Activated CD4-positive, alpha-beta memory T cell treated with anti-CD3 and anti-CD28 coated beads for 36 hours (primary cell): ENCODE measurements at regions of chr14 and their contacts with region 1.

Region 1: GRCh38 chr14:91323671-91324605 is 79.4 kb upstream of the GPR68 start:
- DNase-seq: peak; percentile 97
- H3K4me3 Mint-ChIP-seq: peak overlapping the region; percentile 82
- H3K27ac Mint-ChIP-seq: peak overlapping the region; percentile 99
- H3K4me1 Mint-ChIP-seq: peaks cover 62% of the 10 kb centered on the region
- H3K27me3 Mint-ChIP-seq: no peaks in the 10 kb centered on the region

Region 2: DNA sequence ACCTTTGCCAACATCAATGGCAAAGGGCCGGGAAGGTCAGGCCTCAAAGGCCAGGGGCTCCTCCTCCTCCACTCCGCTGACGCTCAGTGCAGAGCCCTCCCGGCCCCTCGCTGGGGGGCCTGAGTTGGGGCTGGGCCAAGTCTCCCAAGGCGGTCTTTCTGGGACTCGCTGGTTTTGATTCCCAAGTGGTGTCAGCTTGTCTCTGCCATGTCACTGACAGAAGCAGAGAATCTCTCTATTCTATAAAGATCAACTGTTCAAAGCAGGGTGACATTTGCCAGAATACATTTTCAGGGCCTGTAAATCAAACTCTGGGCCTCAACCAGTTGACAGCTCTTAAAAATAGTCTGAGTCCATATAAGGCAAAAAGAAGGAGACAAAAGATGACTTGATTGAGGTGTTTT is 17.8 kb after region 1 on chr14:
- CTCF ChIA-PET with region 1: interaction called, 14 read pairs
- POLR2A ChIA-PET with region 1: no interaction called
- intact Hi-C with region 1: no loop called
- DNase-seq: no peak
- H3K4me3 Mint-ChIP-seq: no peak overlapping the region
- H3K27ac Mint-ChIP-seq: no peak overlapping the region
- H3K4me1 Mint-ChIP-seq: peaks cover 16% of the 10 kb centered on the region
- H3K27me3 Mint-ChIP-seq: no peaks in the 10 kb centered on the region

Region 3: DNA sequence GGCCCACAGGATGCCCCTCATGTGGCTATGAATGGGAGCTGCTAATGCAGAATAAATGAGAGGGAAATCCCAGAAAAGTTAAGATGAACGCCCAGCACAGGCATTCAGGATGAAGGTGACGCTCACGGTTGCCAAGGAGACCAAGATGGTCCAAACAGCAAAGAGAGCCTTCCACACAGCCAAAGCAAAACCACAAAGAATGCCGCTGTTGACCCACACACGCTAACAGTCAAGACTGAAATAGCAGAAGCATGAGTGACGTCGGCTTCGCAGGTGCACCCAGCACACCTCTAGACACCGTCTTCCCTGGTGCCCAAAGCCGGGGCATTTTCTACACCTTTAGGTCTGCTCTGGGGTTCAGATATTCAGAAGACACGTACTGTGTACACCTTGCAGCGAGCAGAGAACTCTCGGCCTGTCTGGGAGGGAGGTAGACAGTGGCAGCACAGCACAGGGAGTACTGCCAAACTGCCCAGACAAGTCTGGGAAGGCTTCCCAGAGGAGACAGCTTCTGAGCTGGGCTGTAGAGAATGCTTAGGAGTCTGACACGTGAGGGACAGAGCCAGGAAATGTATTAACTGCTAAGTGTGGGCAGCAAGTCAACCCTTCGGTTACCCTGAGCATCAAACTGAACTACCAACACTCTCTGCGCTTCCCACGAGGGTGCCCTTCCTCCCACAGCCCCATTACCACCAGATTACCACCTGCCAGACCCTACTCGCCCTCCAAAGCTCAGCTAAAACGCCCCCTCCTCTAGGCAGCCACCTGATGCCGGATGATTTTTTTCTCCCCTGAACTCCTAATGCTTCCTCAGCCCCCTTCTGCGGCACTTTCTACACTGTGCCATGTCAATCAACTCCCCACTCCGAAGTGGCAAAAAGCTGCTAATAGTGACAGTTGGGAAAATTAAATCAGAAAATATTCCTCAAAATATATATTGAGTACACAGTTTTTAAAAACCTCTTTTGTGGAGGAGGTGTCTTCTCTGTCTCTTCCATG is 43.5 kb after region 1 on chr14:
- CTCF ChIA-PET with region 1: interaction called, 18 read pairs
- POLR2A ChIA-PET with region 1: no interaction called
- intact Hi-C with region 1: loop called (anchors 1 kb)
- DNase-seq: peak; percentile 78
- H3K4me3 Mint-ChIP-seq: peak overlapping the region; percentile 59
- H3K27ac Mint-ChIP-seq: peak overlapping the region; percentile 80
- H3K4me1 Mint-ChIP-seq: peaks cover 86% of the 10 kb centered on the region
- H3K27me3 Mint-ChIP-seq: no peaks in the 10 kb centered on the region

Region 4: DNA sequence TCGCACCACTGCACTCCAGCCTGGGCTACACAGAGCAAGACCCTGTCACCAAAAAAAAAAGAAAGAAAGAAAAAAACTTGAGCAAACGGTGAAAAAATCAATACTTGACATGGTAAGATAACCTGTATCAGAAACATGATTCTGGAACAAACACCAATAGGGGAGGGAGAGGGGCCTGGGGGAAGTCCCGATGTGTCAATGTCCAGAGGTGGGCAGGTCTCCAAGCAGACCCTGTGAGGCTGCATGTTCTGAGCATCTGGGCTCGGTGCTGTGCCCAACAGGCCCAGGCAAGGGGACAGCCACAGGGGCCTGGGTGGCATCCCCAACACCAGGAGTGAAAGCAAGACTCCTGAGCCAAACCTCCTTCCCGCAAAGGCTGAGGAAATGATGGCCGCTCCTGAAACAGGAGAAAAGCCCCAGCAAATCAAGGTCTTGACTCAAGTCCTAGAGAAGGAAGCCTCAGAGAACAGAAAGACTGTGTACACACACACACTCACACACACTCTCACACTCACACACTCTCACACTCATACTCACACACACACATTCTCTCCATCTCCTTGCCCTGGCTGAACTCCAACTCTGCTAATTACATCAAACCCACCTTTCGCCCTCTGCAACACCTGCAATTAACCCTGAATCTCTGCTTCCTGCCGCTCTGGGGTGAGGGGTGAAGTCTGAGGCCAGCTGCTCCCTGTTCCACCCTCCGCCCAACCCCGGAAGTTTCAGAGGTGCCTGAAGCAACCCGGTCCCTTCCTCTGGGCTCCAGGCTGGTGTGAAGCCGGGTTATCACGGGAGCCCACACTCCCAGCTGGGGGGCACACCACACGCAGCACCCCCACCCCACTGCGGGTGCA is 73.2 kb after region 1 on chr14:
- CTCF ChIA-PET with region 1: interaction called, 11 read pairs
- POLR2A ChIA-PET with region 1: interaction called, 5 read pairs
- intact Hi-C with region 1: no loop called
- DNase-seq: peak; percentile 84
- H3K4me3 Mint-ChIP-seq: peak overlapping the region; percentile 64
- H3K27ac Mint-ChIP-seq: peak overlapping the region; percentile 89
- H3K4me1 Mint-ChIP-seq: peaks cover 92% of the 10 kb centered on the region
- H3K27me3 Mint-ChIP-seq: no peaks in the 10 kb centered on the region

Region 5: DNA sequence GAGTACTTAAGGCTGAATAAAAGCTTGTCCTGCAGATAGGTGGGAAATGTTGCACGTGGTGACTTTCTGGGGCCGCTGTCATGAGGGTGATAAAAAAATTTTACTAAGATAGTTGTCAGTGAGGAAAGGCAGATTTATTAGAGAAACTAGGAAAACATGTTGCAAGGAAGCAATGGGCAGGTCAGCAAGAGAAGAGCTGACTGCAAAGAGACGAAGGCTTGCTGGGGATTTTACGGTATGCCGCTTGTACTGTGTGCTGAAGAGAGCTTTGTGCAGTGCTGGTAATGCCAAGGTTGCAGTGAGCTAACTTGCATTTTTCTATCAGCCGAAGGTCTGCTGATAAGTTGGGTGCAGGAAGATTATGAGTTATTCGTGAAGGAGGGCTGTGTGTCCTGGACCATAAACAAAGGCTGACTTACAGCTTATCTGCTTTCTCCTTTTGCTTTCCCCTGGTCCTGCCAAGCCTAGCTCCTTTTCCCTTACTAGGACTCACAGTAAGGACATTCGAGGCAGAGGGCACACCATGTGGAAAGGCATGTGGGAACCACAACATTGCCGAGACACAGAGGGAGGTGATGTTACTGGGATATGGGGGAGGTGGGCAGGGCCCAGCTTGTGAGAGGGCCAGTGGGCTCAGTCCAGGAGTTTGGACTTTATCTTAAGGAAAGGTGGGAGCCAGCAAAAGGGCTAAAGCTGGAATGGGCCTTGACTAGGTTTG is 101.0 kb after region 1 on chr14:
- CTCF ChIA-PET with region 1: interaction called, 99 read pairs
- POLR2A ChIA-PET with region 1: no interaction called
- intact Hi-C with region 1: no loop called
- DNase-seq: no peak
- H3K4me3 Mint-ChIP-seq: no peak overlapping the region
- H3K27ac Mint-ChIP-seq: no peak overlapping the region
- H3K4me1 Mint-ChIP-seq: peaks cover 12% of the 10 kb centered on the region
- H3K27me3 Mint-ChIP-seq: no peaks in the 10 kb centered on the region

Region 6: DNA sequence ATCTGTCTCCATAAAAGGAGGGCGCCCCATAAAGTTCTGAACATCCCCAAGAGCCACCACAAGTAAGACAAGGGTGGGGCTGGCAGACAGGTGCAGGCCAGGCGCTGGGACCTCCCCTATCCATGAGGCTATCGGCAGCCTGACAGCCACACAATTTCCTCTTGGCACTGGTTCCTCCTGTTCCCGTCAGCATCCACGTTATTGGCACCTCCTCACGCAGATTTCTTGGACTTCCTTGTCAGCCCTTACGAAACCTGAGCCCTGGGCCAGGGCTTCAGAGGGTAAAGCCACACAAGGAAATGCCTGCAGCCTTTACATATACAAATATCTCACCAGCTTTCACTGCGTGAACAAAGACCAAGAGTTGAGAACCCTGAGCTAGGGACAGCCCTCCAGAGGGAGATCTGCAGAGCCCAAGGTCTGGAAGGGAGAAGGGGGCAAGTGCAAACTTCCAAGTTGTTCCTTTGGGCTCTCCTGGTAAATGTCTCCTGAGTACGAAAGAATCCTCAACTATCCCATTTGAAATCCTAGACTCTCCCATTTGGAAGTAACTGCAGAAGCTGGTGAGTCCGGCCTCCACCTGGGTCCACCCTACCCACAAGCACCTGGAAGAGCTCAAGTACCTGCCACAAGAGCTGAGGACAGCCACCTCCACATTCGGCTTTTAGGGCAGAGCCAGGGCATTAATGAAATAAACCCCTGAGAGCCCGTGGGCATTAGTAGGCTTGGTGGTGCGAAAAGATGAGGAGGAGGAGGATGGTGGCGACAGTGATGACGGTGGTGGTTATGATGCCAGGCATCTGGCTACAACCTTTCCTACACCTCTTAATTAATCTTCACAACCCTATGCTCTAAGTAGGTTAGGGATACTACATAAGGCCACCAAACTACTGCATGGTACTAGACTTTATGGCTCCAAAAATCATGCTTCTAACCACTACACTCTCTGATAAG is 548.9 kb after region 1 on chr14:
- CTCF ChIA-PET with region 1: interaction called, 5 read pairs
- POLR2A ChIA-PET with region 1: no interaction called
- intact Hi-C with region 1: loop called (anchors 5 kb)
- DNase-seq: peak; percentile 43
- H3K4me3 Mint-ChIP-seq: peak overlapping the region; percentile 69
- H3K27ac Mint-ChIP-seq: peak overlapping the region; percentile 83
- H3K4me1 Mint-ChIP-seq: peaks cover 80% of the 10 kb centered on the region
- H3K27me3 Mint-ChIP-seq: no peaks in the 10 kb centered on the region